Calu3 (cell line): ENCODE measurements at regions of chr11 and their contacts with region 1.

Region 1: DNA sequence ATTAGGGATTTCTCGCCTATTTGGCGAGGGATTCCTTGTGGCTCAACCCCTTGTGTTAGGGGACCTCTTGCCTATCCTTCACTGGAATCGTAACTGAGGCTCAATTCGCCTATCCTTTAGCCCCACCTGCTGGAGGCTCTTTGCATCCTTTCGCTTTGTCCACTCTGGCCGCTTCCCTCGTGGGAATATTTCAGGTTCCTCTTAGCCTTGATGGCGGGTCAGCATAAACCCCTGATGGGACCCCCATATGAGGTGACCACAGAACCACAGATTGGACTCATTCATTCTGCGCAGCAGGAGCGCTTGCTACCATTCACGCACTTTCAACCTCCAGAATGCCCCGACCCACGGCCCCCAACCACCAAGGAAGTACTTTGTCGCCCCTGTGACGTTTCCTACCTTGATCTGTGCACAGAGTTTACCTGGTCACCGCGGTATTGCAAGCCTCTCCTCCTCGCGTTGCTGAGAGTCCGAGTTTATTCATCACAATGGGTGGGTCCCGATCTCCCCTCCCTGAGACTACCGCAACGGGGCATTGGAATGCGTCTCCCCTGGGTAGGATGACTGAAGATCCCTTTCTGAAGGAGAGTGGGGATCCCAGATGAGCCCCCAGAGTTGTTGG is at the start of gene OR52N2:
- DNase-seq: peak; percentile 79
- H3K4me3 Mint-ChIP-seq: peak within 1 kb of the TSS; percentile 81
- H3K27ac Mint-ChIP-seq: peak within 1 kb of the TSS; percentile 38
- H3K4me1 Mint-ChIP-seq: peaks cover 12% of the 10 kb centered on the region
- H3K27me3 Mint-ChIP-seq: peaks cover 48% of the 10 kb centered on the region
- CTCF ChIP-seq: peak; percentile 82
- total RNA-seq, gene OR52N2: not detected in 2 replicates

Region 2: DNA sequence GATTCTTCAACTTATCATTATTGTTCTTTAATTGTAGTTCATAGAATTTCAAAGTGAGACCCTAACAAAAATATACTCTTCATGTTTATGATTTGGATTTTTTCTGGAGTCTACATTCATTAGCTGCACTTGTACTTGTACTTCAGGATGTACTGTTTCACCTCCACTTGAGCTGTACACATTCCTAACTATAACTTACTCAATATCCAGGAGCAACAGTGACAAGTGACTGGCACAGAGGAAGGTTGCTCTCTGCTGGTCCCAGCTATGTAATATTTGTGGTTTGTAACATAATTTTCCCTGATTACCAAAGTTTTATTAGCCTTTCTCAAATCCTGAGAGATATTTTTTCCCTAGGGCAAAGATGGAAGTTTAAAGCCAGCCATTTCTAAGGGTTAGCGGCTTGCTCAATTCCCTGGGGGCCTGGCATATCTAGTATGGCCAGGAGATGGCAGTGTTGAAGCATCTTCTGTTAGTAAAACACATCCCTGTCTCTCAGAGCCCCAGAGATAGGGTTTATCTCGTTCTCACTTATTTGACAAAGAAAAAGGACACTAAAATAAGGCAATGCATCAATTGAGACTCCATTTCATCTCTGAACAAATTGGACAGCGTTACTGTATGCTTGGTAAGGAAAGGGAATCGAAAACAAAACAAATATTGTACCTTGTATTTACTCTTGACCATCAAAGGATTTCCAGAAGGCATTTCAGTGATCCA is 684.6 kb before region 1 on chr11:
- CTCF ChIA-PET with region 1: no interaction called
- intact Hi-C with region 1: loop called (anchors 1 kb)
- DNase-seq: peak; percentile 68
- H3K4me3 Mint-ChIP-seq: no peak overlapping the region
- H3K27ac Mint-ChIP-seq: no peak overlapping the region
- H3K4me1 Mint-ChIP-seq: no peaks in the 10 kb centered on the region
- H3K27me3 Mint-ChIP-seq: peaks cover 23% of the 10 kb centered on the region
- CTCF ChIP-seq: peak; percentile 54

Region 3: DNA sequence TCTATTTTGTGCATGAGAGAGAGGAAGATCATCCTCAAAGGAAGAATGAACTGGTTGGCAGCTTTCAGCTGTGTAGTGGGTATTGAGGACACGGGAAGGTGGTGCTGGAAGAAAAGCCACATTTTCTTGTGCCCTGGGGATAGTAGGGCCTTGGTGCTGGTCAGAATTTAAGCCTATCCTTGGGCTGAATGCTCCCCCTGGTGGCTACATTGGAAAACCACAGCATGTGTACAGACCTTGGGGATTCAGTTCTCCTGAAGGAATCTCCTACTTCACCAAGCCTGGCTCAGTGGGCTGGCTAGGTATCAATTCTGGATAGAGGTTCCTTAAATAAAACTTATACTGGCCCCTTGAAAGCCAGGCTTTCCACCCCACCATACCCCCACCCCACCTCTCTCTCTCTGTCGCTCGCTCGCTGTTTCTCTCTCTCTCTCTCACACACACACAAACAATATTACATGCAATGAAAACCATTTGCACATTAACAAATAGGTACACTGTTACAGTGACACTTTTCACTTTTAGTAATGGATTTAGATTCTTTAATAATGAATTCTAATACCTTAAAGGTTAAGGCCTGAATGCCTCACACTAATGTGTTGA is 427.8 kb before region 1 on chr11:
- CTCF ChIA-PET with region 1: no interaction called
- intact Hi-C with region 1: loop called (anchors 5 kb)
- DNase-seq: peak; percentile 59
- H3K4me3 Mint-ChIP-seq: no peak overlapping the region
- H3K27ac Mint-ChIP-seq: no peak overlapping the region
- H3K4me1 Mint-ChIP-seq: no peaks in the 10 kb centered on the region
- H3K27me3 Mint-ChIP-seq: peaks cover 15% of the 10 kb centered on the region
- CTCF ChIP-seq: peak; percentile 67

Region 4: DNA sequence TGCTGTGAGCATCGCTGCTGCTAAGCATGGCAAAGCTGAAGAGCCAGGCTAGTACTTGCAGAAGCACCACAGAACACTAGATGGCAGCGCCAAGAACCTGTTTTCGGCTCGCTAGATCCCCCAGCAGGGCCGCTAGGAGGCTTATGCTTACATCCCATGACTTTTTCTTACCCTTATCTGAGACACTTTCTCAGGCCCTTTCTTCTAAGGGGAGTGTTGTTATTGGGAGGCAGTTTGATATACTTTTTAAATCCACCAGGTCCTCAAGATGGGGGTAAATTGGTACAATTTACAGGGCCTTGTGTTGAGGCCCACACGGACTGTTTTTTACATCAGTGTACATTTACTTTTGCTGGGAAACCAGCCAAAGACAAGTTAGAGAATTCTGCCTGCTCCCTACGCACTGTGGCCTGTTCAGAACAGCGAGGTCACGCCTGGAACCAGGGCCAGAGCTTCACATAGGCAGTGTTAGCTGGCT is 208.2 kb before region 1 on chr11:
- CTCF ChIA-PET with region 1: interaction called, 8 read pairs
- intact Hi-C with region 1: loop called (anchors 5 kb)
- DNase-seq: peak; percentile 72
- H3K4me3 Mint-ChIP-seq: no peak overlapping the region
- H3K27ac Mint-ChIP-seq: no peak overlapping the region
- H3K4me1 Mint-ChIP-seq: peaks cover 27% of the 10 kb centered on the region
- H3K27me3 Mint-ChIP-seq: no peaks in the 10 kb centered on the region
- CTCF ChIP-seq: peak; percentile 81